Caco-2 (cell line): ENCODE measurements at regions of chr11 and their contacts with region 1.

Region 1: GRCh38 chr11:13210424-13210823 is 67.2 kb upstream of the BMAL1 start:
- DNase-seq: peak; percentile 76 to 78
- H3K4me3 ChIP-seq: no peak overlapping the region
- H3K4me3 Mint-ChIP-seq: no peak overlapping the region
- H3K27ac Mint-ChIP-seq: no peak overlapping the region
- H3K4me1 ChIP-seq: peaks cover 12% of the 10 kb centered on the region
- H3K4me1 Mint-ChIP-seq: peaks cover 19% of the 10 kb centered on the region
- H3K27me3 ChIP-seq: no peaks in the 10 kb centered on the region
- H3K27me3 Mint-ChIP-seq: no peaks in the 10 kb centered on the region
- CTCF ChIP-seq: peak; percentile 75 to 83

Region 2: GRCh38 chr11:12963792-12964536 is 246.5 kb before region 1 on chr11:
- CTCF ChIA-PET with region 1: interaction called, 9 read pairs
- POLR2A ChIA-PET with region 1: no interaction called
- intact Hi-C with region 1: loop called (anchors 1 kb)
- DNase-seq: peak; percentile 70 to 85
- H3K4me3 ChIP-seq: no peak overlapping the region
- H3K4me3 Mint-ChIP-seq: no peak overlapping the region
- H3K27ac Mint-ChIP-seq: no peak overlapping the region
- H3K4me1 ChIP-seq: no peaks in the 10 kb centered on the region
- H3K4me1 Mint-ChIP-seq: no peaks in the 10 kb centered on the region
- H3K27me3 ChIP-seq: no peaks in the 10 kb centered on the region
- H3K27me3 Mint-ChIP-seq: peaks cover 5% of the 10 kb centered on the region
- CTCF ChIP-seq: peak; percentile 81 to 93

Region 3: DNA sequence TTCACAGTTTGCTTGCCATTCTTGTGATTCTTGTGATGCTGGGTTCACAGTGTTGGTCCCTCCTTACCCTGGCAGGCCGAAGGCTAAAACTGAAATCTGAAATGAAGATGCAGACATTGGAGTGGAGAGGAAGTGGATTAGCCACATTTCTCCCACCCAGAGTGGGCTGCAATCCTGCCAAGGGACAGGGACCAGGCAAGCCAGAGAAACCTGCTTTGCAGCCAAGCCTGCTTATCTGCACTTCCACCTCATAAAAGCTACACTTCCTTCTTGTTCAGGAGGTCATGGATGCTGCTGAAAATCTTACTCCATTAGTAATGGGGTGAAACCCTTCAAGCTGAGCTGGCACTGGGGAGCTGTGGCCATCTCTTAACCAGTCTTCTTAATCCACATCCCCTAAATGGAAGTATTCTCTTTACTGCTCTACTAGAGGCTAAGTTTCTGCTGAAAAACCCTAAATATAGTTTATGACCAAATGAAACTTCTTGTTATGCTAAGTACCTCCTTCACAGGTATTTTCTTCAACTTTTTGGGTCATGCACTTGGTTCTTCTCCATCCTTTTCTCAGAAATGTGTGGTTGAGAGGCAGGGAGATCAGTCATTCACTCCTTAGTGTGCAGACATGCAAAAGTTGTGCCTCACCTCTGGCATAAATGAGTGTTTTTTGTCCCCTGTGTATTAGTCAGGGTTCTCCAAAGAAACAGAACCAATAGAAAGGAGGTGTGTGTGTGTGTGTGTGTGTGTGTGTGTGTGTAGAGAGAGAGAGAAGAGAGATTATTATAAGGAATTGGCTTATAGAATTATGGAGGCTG is 66.7 kb before region 1 on chr11:
- CTCF ChIA-PET with region 1: no interaction called
- POLR2A ChIA-PET with region 1: no interaction called
- intact Hi-C with region 1: no loop called
- DNase-seq: peak; percentile 45 to 47
- H3K4me3 ChIP-seq: no peak overlapping the region
- H3K4me3 Mint-ChIP-seq: no peak overlapping the region
- H3K27ac Mint-ChIP-seq: no peak overlapping the region
- H3K4me1 ChIP-seq: peaks cover 52% of the 10 kb centered on the region
- H3K4me1 Mint-ChIP-seq: peaks cover 37% of the 10 kb centered on the region
- H3K27me3 ChIP-seq: no peaks in the 10 kb centered on the region
- H3K27me3 Mint-ChIP-seq: no peaks in the 10 kb centered on the region
- CTCF ChIP-seq: no peak

Region 4: GRCh38 chr11:13238879-13239514 is 28.6 kb after region 1 on chr11:
- CTCF ChIA-PET with region 1: interaction called, 4 read pairs
- POLR2A ChIA-PET with region 1: no interaction called
- intact Hi-C with region 1: loop called (anchors 1 kb)
- DNase-seq: peak; percentile 53 to 65
- H3K4me3 ChIP-seq: no peak overlapping the region
- H3K4me3 Mint-ChIP-seq: no peak overlapping the region
- H3K27ac Mint-ChIP-seq: no peak overlapping the region
- H3K4me1 ChIP-seq: no peaks in the 10 kb centered on the region
- H3K4me1 Mint-ChIP-seq: no peaks in the 10 kb centered on the region
- H3K27me3 ChIP-seq: no peaks in the 10 kb centered on the region
- H3K27me3 Mint-ChIP-seq: peaks cover 10% of the 10 kb centered on the region
- CTCF ChIP-seq: peak; percentile 87 to 89

Region 5: DNA sequence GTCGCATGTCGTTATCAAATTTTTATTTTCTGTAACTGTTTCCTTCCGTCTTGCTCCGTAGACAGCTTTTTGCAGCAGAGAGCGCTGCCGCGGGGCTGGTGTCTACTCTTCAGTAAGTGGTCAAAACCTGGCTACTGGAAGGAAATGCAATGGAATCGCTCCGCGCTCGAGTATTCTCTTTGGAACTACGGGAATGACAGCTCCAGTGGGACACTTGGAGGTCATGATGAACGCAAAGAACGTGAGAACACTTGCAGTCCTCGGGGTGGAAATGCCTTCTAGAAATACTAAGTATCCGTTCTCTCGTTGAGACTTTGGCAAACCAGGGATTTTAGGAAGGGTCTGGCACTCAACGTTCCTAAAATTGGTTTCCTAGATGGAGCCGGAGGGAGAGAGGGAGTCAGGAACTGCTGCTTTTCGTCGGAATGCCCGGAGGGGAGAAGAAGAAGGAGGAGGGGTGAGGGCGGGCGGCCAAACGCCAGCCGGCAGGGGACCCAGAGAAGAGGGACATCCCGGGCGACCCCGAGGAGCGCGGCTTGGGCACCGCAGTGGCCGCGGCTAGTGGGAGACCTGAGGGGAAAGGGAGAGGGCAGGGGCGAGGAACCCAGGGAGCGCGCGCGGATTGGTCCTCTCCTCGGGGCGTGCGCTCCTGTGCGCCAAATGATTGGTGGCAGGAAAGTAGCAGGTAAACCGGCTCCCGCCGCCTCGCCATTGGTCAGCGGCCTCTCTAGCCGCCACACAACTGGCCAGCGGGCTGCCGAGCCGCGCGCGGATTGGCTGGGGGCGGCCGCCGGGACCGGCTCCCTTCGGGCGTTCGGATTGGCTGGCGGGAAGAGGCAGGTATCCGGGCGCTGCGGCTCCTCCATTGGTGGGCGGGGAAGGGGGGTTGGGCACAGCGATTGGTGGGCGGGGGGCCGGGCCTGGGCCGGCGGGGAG is 66.7 kb after region 1 on chr11:
- CTCF ChIA-PET with region 1: interaction called, 3 read pairs
- POLR2A ChIA-PET with region 1: no interaction called
- intact Hi-C with region 1: loop called (anchors 5 kb)
- DNase-seq: peak; percentile 98 to 99
- H3K4me3 ChIP-seq: peak overlapping the region; percentile 90
- H3K4me3 Mint-ChIP-seq: peak overlapping the region; percentile 89
- H3K27ac Mint-ChIP-seq: no peak overlapping the region
- H3K4me1 ChIP-seq: peaks cover 12% of the 10 kb centered on the region
- H3K4me1 Mint-ChIP-seq: peaks cover 7% of the 10 kb centered on the region
- H3K27me3 ChIP-seq: no peaks in the 10 kb centered on the region; the same call in 1 of the 2 replicates
- H3K27me3 Mint-ChIP-seq: peaks cover 32% of the 10 kb centered on the region
- CTCF ChIP-seq: no peak

Region 6: DNA sequence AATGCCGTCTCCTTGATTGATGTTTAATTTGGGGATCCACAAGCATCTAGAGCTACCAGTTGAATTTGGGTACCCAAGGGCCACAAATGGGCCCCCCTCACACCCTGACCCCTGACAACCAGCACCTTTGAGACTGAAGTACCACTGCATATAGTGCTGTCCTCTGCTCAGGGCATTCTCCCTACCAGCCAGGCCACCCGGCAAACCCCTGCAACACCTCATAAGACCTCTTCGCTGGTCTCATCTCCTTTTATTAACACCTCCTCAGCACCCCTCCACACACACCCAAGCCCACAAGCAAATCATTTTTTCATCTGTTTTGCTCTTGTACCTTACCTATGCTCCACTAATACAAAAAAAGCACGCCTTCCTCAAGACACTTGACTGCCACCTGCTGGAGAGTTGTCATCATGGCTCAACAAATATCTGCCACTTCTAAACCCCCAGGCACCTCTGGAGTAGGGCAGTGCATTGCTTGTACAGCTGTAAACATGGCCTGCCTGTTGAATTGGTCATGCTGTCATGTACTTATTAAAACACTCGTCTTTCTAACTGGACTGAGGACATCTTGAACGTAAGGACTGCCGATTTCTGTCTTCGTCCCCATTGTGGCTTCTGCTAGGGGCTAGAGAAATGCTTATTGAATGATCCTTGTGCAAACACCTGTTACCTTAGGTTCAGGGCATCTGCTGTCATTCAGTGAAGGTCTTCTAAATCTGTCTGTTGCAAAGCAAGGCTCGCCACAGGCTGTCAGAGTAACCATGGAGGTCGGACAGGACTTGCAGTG is 133.7 kb after region 1 on chr11:
- CTCF ChIA-PET with region 1: interaction called, 32 read pairs
- POLR2A ChIA-PET with region 1: no interaction called
- intact Hi-C with region 1: loop called (anchors 1 kb)
- DNase-seq: peak; percentile 76 to 80
- H3K4me3 ChIP-seq: no peak overlapping the region
- H3K4me3 Mint-ChIP-seq: no peak overlapping the region
- H3K27ac Mint-ChIP-seq: no peak overlapping the region
- H3K4me1 ChIP-seq: no peaks in the 10 kb centered on the region
- H3K4me1 Mint-ChIP-seq: peaks cover 12% of the 10 kb centered on the region
- H3K27me3 ChIP-seq: no peaks in the 10 kb centered on the region
- H3K27me3 Mint-ChIP-seq: no peaks in the 10 kb centered on the region
- CTCF ChIP-seq: peak; percentile 81 to 82

Region 7: DNA sequence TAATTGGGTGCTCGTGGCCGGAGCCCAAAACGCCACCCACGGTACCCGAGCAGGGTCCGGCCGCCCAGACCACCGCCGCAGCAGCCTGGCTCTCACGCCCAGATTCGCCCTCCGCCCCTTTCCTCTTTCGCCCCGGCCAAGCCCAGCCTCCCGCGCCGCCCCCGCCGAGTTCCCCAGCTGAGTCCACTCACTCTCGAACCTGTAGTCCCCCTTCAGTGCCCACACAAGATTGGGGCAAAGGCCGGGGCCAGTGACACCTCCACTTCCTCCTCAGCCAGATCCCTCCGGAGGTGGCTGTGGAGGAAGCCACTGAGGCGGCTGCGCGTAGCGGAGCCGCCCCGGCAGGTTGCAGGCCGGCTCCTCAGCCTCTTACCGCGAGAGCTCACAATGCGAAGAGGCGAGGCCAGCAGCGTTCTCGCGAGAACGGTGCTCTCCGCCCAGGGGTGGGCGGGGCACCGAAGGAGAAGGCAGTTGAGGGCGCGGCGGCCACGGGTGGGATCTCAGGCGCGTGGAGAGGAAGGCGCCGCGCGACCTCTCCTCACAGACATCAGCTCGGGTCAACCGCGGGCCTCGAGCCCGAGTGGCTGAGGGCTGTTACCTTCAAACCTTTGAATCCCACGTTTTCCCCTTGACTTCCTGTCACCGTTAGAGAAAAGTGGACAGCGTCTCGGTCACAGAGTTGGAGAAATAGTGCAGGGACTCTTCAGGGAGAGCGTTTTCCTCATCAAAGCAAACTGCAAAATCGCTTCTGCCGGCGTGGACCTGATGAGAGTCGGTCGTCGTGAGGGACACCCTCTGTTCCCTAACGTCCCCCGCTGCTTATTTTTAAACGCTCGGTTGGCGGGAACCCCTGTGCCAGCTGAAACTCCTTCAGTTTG is 252.7 kb after region 1 on chr11 and contains the start of gene BTBD10:
- CTCF ChIA-PET with region 1: no interaction called
- POLR2A ChIA-PET with region 1: interaction called, 3 read pairs
- intact Hi-C with region 1: loop called (anchors 10 kb)
- DNase-seq: peak; percentile 95
- H3K4me3 ChIP-seq: peak within 1 kb of the TSS; percentile 81
- H3K4me3 Mint-ChIP-seq: peak within 1 kb of the TSS; percentile 99
- H3K27ac Mint-ChIP-seq: peak within 1 kb of the TSS; percentile 100
- H3K4me1 ChIP-seq: peaks cover 27% of the 10 kb centered on the region
- H3K4me1 Mint-ChIP-seq: peaks cover 29% of the 10 kb centered on the region
- H3K27me3 ChIP-seq: no peaks in the 10 kb centered on the region
- H3K27me3 Mint-ChIP-seq: no peaks in the 10 kb centered on the region
- CTCF ChIP-seq: no peak
- total RNA-seq, gene BTBD10: 41.6 and 45.0 TPM in 2 replicates